PC-9 (cell line): ENCODE measurements at regions of chr15 and their contacts with region 1.

Region 1: DNA sequence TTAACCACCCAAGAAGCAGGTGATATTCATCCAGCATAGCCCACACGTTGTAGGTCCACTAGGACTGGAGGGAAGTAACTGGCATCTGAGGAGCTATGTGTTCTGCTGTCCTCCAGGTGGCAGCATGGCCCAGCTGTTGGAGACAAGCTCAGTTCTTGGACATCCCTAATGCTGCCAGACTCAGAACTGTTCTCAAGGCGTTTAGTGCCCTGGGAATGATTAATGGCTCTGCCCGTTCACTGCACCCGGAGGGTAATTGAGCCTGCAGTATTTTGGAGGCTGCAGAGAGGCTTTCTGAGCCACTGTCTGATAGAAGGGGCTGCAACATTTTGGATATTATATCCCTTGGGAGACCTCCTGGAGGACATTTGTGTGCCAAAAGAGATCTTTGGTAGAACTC is 521.2 kb upstream of the SEMA6D start:
- DNase-seq: peak; percentile 54 to 57
- H3K4me3 ChIP-seq: no peak overlapping the region
- H3K27ac ChIP-seq: no peak overlapping the region
- H3K4me1 ChIP-seq: no peaks in the 10 kb centered on the region
- H3K27me3 ChIP-seq: no peaks in the 10 kb centered on the region
- CTCF ChIP-seq: peak; percentile 72

Region 2: GRCh38 chr15:48285329-48286214 is 1089.5 kb after region 1 on chr15:
- CTCF ChIA-PET with region 1: interaction called, 4 read pairs
- POLR2A ChIA-PET with region 1: no interaction called
- intact Hi-C with region 1: loop called (anchors 1 kb)
- DNase-seq: peak; percentile 40 to 43
- H3K4me3 ChIP-seq: no peak overlapping the region
- H3K27ac ChIP-seq: no peak overlapping the region
- H3K4me1 ChIP-seq: no peaks in the 10 kb centered on the region
- H3K27me3 ChIP-seq: no peaks in the 10 kb centered on the region
- CTCF ChIP-seq: peak; percentile 66